WTC11 (cell line): ENCODE measurements at regions of chr15 and their contacts with region 1.

Region 1: GRCh38 chr15:64681424-64682024 is 93.9 kb downstream of the RBPMS2 start:
- DNase-seq: peak; percentile 56
- ATAC-seq: peak; percentile 86
- H3K4me3 Mint-ChIP-seq: no peak overlapping the region
- H3K27ac Mint-ChIP-seq: no peak overlapping the region
- H3K4me1 Mint-ChIP-seq: peaks cover 19% of the 10 kb centered on the region
- H3K27me3 Mint-ChIP-seq: no peaks in the 10 kb centered on the region
- CTCF ChIP-seq: peak; percentile 27; the same call in 1 of the 2 replicates

Region 2: GRCh38 chr15:64162870-64163658 is 518.5 kb before region 1 on chr15 and contains the start of gene PPIB:
- CTCF ChIA-PET with region 1: interaction called, 10 read pairs
- POLR2A ChIA-PET with region 1: no interaction called
- DNase-seq: peak; percentile 95
- ATAC-seq: peak; percentile 96
- H3K4me3 Mint-ChIP-seq: peak within 1 kb of the TSS; percentile 84
- H3K27ac Mint-ChIP-seq: peak within 1 kb of the TSS; percentile 92
- H3K4me1 Mint-ChIP-seq: peaks cover 33% of the 10 kb centered on the region
- H3K27me3 Mint-ChIP-seq: no peaks in the 10 kb centered on the region
- CTCF ChIP-seq: no peak
- total RNA-seq, gene PPIB: 469 to 495 TPM (median 485 TPM) in 3 replicates

Region 3: DNA sequence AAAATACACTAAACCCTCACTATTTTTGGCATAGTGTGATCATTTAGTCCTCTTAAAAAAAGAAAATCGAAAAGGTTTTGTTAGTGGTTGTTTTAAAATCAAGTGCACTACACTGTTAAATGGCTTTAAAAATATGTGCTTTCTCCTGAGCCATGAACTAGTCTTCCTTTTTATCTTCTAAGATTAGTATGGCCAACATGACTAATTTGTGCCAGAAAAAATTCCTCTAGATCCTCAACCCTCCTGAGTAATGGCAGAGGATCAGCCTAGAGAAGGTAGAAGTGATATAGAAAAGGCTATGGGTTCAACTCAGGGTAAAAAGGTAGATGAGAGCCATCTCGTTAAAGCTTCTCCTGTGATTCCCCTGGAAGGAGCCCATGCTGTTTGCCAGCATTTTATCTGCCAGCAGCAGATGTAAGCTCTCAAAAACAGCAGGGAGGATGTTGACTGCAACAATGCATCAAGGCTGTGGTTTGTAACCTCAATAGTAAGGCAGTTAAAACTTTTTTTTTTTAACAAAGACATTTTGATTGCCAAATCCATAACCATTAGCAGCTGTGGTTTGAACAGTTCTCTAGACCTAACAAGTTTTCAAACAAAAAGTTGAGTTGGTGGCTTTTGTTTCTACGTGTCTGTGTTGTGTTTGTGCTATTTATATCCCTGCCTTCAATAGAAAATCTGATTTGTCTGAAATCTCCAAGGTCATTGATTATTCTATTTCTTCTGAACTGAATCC is 251.4 kb before region 1 on chr15:
- CTCF ChIA-PET with region 1: interaction called, 11 read pairs
- POLR2A ChIA-PET with region 1: no interaction called
- DNase-seq: peak; percentile 42
- ATAC-seq: peak; percentile 93
- H3K4me3 Mint-ChIP-seq: no peak overlapping the region; the same call in 1 of the 2 replicates
- H3K27ac Mint-ChIP-seq: peak overlapping the region; percentile 51
- H3K4me1 Mint-ChIP-seq: peaks cover 20% of the 10 kb centered on the region
- H3K27me3 Mint-ChIP-seq: peaks cover 61% of the 10 kb centered on the region
- CTCF ChIP-seq: no peak

Region 4: DNA sequence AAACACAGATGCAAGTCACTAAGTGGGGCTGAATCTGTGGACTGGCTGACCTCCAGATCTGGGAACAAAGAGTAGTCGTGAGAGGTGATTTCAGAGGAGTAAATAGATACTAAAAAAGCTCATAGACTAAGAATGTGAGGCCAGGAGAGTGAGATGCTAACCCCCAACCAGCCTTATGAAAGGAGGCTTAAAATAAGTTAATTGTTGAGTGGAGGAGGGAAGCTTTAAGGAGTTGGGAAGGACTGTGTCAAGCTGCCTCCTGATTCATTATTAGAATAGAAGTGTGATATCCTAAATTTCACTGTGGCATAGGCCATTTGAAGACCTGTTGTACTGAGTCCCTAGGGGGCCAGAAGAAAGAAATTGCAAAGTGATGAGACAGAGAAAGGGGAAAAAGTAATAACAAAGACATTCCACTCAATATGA is 13.8 kb before region 1 on chr15:
- CTCF ChIA-PET with region 1: interaction called, 10 read pairs
- POLR2A ChIA-PET with region 1: no interaction called
- DNase-seq: no peak
- ATAC-seq: peak; percentile 78
- H3K4me3 Mint-ChIP-seq: no peak overlapping the region
- H3K27ac Mint-ChIP-seq: peak overlapping the region; percentile 73
- H3K4me1 Mint-ChIP-seq: peaks cover 13% of the 10 kb centered on the region
- H3K27me3 Mint-ChIP-seq: no peaks in the 10 kb centered on the region
- CTCF ChIP-seq: no peak

Region 5: DNA sequence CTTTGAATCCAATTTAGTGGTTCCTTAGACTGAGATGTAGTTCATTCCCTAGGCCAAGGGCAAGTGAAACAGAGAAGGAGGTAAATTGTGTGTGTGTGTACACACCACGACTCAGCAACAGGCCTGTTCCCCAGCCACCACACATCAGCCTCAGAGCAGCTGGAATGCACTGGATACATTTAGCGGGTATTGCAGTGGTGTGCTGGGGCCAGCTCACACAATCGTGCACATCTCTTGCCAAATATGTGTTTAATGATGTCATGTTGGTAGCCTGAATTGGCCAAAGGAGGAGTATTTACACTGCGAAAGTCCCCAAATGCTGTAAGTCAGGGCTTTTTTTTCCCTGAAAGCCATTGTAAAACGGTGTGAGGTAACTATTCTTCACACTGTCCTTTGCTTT is 11.6 kb after region 1 on chr15:
- CTCF ChIA-PET with region 1: interaction called, 10 read pairs
- POLR2A ChIA-PET with region 1: interaction called, 4 read pairs
- DNase-seq: no peak
- ATAC-seq: no peak
- H3K4me3 Mint-ChIP-seq: no peak overlapping the region
- H3K27ac Mint-ChIP-seq: peak overlapping the region; percentile 97
- H3K4me1 Mint-ChIP-seq: peaks cover 73% of the 10 kb centered on the region
- H3K27me3 Mint-ChIP-seq: no peaks in the 10 kb centered on the region
- CTCF ChIP-seq: no peak

Region 6: DNA sequence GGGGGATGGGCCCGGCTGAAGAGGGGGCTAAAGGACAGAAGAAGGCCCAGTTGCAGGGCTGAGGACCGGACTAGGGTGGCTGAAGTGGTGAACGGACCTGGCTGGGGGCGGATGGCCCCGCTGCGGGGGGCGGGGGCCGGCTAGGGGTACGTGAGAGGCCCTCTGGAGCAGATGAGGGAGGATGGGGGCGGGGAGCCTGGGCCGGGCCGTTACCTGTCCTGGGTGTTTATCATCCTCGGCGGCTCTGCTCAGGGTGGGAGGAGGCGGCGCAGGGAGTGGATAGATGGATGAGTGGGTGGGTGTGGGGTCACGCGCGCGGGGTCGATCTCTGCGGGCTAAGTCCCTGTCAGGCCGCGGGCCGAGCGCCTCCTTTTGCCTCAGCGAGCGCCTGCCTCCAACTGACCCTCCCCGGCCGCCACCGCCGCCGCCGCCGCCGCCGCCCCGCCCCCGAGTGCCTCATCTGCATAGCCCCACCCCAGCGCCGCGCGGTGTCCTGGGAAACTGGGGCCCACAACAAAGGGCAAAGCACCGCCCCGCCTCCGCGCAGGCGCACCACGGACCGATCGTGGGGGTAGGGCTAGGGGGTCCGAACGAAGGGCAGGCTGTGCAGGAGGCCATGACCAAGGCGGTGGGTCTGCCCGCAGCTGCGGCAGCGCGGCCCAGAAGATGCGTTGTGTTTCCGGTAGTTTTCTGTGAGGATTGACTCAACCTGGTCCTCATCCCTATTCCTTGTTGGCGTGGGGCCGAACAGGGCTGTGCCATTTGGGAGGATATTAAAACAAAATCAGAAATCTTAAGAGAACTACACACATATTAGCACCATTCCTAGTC is 21.5 kb after region 1 on chr15:
- CTCF ChIA-PET with region 1: interaction called, 27 read pairs
- POLR2A ChIA-PET with region 1: interaction called, 14 read pairs
- DNase-seq: peak; percentile 99
- ATAC-seq: peak; percentile 78
- H3K4me3 Mint-ChIP-seq: peak overlapping the region; percentile 82
- H3K27ac Mint-ChIP-seq: peak overlapping the region; percentile 98
- H3K4me1 Mint-ChIP-seq: peaks cover 47% of the 10 kb centered on the region
- H3K27me3 Mint-ChIP-seq: no peaks in the 10 kb centered on the region
- CTCF ChIP-seq: no peak

Region 7: GRCh38 chr15:65044724-65045481 is 363.4 kb after region 1 on chr15 and contains the start of gene SLC51B:
- CTCF ChIA-PET with region 1: no interaction called
- POLR2A ChIA-PET with region 1: no interaction called
- DNase-seq: no peak
- ATAC-seq: no peak; the same call in 1 of the 2 replicates
- H3K4me3 Mint-ChIP-seq: no peak within 1 kb of the TSS
- H3K27ac Mint-ChIP-seq: no peak within 1 kb of the TSS
- H3K4me1 Mint-ChIP-seq: peaks cover 10% of the 10 kb centered on the region; the same call in 1 of the 2 replicates
- H3K27me3 Mint-ChIP-seq: peaks cover 4% of the 10 kb centered on the region; the same call in 1 of the 2 replicates
- CTCF ChIP-seq: no peak
- total RNA-seq, gene SLC51B: not detected in 3 replicates